ENCODE measurements at regions of chr11 and their contacts with region 1.

Region 1: GRCh38 chr11:46159699-46160098 is 38.4 kb upstream of the PHF21A start:
- DNase-seq: no peak
- ATAC-seq: no peak

Region 2: GRCh38 chr11:46259971-46260560 is 100.4 kb after region 1 on chr11:
- intact Hi-C with region 1: no loop called
- DNase-seq: no peak
- ATAC-seq: no peak

Region 3: GRCh38 chr11:47593934-47594855 is 1434.5 kb after region 1 on chr11 and contains the start of gene C1QTNF4:
- intact Hi-C with region 1: loop called (anchors 5 kb)
- DNase-seq: no peak
- ATAC-seq: no peak
- total RNA-seq, gene C1QTNF4: 5.0 TPM

Measured in sciatic nerve (tissue), 2 donors.